Activated CD4-positive, alpha-beta T cell treated with anti-CD3 and anti-CD28 coated beads for 36 hours (primary cell): ENCODE measurements at regions of chr5 and their contacts with region 1.

Region 1: GRCh38 chr5:110414360-110414759 is 312.1 kb downstream of the TMEM232 start:
- DNase-seq: peak; percentile 7
- ATAC-seq: no peak
- H3K4me3 Mint-ChIP-seq: no peak overlapping the region
- H3K27ac Mint-ChIP-seq: no peak overlapping the region
- H3K4me1 Mint-ChIP-seq: peaks cover 5% of the 10 kb centered on the region
- H3K27me3 Mint-ChIP-seq: no peaks in the 10 kb centered on the region

Region 2: GRCh38 chr5:109876941-109877650 is 537.3 kb before region 1 on chr5:
- CTCF ChIA-PET with region 1: no interaction called
- POLR2A ChIA-PET with region 1: no interaction called
- intact Hi-C with region 1: loop called in 1 of 2 experiments (anchors 10 kb)
- DNase-seq: no peak
- ATAC-seq: no peak
- H3K4me3 Mint-ChIP-seq: no peak overlapping the region
- H3K27ac Mint-ChIP-seq: no peak overlapping the region
- H3K4me1 Mint-ChIP-seq: peaks cover 25% of the 10 kb centered on the region
- H3K27me3 Mint-ChIP-seq: no peaks in the 10 kb centered on the region

Region 3: GRCh38 chr5:110115487-110115886 is 298.9 kb before region 1 on chr5:
- CTCF ChIA-PET with region 1: no interaction called
- POLR2A ChIA-PET with region 1: no interaction called
- intact Hi-C with region 1: no loop called
- DNase-seq: no peak
- ATAC-seq: no peak
- H3K4me3 Mint-ChIP-seq: no peak overlapping the region
- H3K27ac Mint-ChIP-seq: no peak overlapping the region
- H3K4me1 Mint-ChIP-seq: no peaks in the 10 kb centered on the region
- H3K27me3 Mint-ChIP-seq: peaks cover 2% of the 10 kb centered on the region